ENCODE measurements at regions of chr3 and their contacts with region 1.

Region 1: DNA sequence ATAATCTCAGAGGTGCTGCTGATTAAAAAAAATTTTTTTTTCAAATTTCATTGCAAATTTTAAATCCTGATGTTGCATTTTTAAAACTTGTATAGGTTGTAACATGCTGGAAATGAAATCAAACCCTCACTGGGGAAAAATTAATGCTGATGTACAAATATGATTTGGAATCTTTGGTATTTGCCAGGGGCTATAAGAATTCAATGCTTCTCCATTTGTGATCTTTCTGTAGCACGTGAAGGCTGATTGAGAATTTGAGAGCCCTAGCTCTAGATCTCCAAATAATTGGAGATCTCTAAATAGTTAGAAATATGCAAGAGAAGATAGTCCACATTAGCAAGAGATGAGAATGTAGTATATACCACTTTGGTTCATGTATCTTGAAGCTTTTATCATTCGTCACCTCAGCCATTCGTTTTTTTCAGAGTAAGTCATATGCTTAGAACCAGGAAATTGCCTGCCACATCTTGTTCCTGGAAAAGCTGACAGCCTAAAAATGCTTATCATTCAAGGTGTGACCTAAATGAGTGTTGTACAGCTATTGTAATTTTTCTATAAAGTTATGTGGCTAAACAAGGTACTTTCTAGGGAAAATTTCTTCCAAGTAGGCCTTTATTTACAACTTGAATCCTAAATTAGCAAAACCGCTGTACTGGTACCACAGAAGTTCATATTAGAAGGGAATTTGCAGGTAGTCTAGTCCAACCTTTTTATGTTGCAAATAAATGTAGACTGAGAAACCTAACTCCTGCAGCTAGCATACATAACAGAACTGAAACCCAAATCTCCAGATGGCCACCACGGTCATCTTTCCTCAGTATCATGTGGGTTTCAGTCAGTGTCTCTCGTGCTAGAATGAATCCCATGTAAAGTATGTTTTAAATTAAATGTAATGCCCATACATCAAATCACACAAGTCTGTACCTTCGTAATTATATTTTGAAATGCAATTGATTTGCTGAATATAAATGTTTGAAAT is 48.5 kb downstream of the FNDC3B start:
- DNase-seq: no peak
- H3K4me3 Mint-ChIP-seq: no peak overlapping the region
- H3K27ac Mint-ChIP-seq: peak overlapping the region; percentile 62
- H3K4me1 Mint-ChIP-seq: peaks cover 55% of the 10 kb centered on the region
- H3K27me3 Mint-ChIP-seq: no peaks in the 10 kb centered on the region

Region 2: DNA sequence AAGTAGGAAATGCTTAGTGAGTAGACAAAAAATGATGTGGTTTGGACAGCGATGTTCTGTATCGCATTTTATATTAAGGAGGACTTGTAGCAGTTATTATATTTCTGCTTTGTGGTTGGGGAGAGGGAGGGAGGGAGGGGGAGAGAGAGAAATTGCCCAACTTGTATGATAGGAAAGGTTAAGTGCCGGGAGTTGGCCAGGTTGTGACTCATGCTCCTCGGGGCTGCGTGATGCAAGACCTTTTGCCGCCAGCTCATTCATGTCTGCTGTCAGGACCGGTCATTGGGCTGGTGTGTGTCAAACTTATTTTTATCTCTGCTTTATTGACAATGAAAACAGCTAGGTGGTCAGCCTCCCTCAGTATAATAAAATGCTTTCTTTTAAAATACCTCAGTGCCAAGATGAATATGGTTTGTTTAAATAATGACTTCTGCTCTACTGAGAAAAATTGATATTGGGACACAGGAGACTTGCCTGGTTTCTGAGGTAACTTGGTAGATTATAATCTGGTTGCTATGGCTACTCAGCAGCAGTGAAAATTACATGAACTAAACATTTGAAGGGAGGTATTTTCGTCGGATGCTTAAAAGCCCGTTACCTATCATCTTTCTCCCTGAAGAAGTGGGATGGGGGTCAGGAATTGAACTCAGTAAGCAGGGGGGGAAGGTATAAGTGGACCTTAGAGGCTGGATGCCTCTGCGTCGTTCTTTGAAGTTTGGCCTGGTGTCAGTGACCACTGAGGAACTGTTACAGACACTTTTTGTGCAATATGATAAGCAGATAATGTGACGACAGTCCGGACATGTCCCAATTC is 42.2 kb after region 1 on chr3:
- intact Hi-C with region 1: loop called (anchors 10 kb)
- DNase-seq: peak; percentile 36
- H3K4me3 Mint-ChIP-seq: no peak overlapping the region
- H3K27ac Mint-ChIP-seq: peak overlapping the region; percentile 82
- H3K4me1 Mint-ChIP-seq: peaks cover 60% of the 10 kb centered on the region
- H3K27me3 Mint-ChIP-seq: no peaks in the 10 kb centered on the region

Region 3: DNA sequence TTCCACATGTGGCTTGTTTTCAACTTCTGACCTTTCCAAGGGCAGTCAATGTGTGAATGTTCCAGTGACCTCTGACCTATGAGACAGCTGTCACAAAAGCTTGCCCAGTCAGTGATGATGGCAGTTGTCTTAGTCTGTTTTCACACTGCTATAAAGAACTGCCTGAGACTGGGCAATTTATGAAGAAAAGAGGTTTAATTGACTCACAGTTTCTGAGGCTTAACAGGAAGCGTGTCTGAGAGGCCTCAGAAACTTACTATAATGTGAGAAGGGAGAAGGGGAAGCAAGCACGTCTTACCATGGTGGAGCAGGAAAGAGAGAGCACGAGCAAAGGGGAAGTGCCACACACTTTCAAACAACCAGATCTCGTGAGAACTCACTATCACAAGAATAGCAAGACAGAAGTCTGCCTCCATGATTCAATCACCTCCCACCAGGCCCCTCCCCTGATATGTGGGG is 758.2 kb after region 1 on chr3:
- intact Hi-C with region 1: no loop called
- DNase-seq: no peak
- H3K4me3 Mint-ChIP-seq: no peak overlapping the region
- H3K27ac Mint-ChIP-seq: peak overlapping the region; percentile 68
- H3K4me1 Mint-ChIP-seq: peaks cover 11% of the 10 kb centered on the region
- H3K27me3 Mint-ChIP-seq: peaks cover 11% of the 10 kb centered on the region